ENCODE measurements at regions of chr3 and their contacts with region 1.

Region 1: DNA sequence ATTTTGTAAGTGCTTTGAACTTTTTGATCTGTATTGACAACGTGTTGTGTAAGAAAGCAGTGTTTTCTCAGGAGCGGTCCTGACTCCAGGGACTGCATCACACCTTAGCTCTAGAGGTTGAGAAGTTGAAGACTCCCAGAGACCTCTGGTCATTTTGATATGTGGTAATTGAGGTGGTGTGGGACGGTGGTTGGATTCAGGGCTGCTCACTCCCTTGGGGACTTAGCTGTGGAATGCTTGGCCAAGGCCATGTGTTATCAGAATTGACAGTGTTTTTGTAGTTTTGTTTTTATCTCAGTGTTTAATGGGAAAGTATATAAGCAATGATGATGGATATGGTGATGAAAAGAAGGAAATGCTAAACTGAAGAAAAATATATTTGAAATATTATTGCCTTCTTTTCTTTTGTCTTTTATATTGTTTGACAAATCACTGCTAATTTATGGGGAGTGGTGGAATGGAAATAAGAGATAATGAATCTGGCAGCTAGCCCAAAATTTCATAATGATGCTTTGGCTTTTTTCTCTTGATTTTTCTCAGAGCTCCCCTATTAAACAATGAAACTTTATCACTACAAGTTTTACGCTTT is 16.0 kb downstream of the CMSS1 start:
- DNase-seq: no peak
- ATAC-seq: no peak
- H3K4me3 ChIP-seq: no peak overlapping the region
- H3K27ac ChIP-seq: no peak overlapping the region
- H3K4me1 ChIP-seq: peaks cover 28% of the 10 kb centered on the region
- H3K27me3 ChIP-seq: no peaks in the 10 kb centered on the region
- CTCF ChIP-seq: no peak
- EP300 ChIP-seq: no peak
- POLR2A ChIP-seq: no peak
- RAD21 ChIP-seq: no peak

Region 2: GRCh38 chr3:99808151-99808794 is 25.4 kb before region 1 on chr3:
- CTCF ChIA-PET with region 1: no interaction called
- POLR2A ChIA-PET with region 1: no interaction called
- in situ Hi-C with region 1: no loop called
- intact Hi-C with region 1: no loop called
- DNase-seq: peak; percentile 55
- ATAC-seq: peak; percentile 50; the same call in 2 of the 3 replicates
- H3K4me3 ChIP-seq: no peak overlapping the region
- H3K27ac ChIP-seq: no peak overlapping the region
- H3K4me1 ChIP-seq: no peaks in the 10 kb centered on the region
- H3K27me3 ChIP-seq: no peaks in the 10 kb centered on the region
- CTCF ChIP-seq: peak; percentile 70
- EP300 ChIP-seq: no peak
- POLR2A ChIP-seq: no peak
- RAD21 ChIP-seq: no peak

Region 3: DNA sequence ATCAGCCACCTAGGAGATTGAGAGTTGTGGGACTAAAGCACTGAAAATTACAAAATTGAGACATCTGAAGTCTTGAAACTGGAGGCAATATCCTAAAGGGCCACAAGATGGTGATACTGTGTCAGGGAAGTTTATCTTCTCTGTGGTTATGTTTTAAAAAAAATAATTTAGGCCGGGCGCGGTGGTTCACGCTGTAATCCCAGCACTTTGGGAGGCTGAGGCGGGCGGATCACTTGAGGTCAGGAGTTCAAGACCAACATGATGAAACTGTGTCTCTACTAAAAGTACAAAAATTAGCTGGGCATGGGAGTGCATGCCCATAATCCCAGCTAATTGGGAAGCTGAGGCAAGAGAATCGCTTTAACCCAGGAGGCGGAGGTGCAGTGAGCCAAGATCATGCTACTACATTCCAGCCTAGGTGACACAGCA is 482.9 kb after region 1 on chr3:
- CTCF ChIA-PET with region 1: no interaction called
- POLR2A ChIA-PET with region 1: no interaction called
- in situ Hi-C with region 1: no loop called
- intact Hi-C with region 1: loop called (anchors 1 kb)
- DNase-seq: peak; percentile 39
- ATAC-seq: peak; percentile 72
- H3K4me3 ChIP-seq: no peak overlapping the region
- H3K27ac ChIP-seq: no peak overlapping the region
- H3K4me1 ChIP-seq: no peaks in the 10 kb centered on the region
- H3K27me3 ChIP-seq: no peaks in the 10 kb centered on the region
- CTCF ChIP-seq: peak; percentile 63
- EP300 ChIP-seq: no peak
- POLR2A ChIP-seq: no peak
- RAD21 ChIP-seq: peak; percentile 48; the same call in 1 of the 2 replicates

Measured in HepG2 (cell line).